ENCODE measurements at regions of chr15 and their contacts with region 1.

Region 1: GRCh38 chr15:89958074-89958805 is 42.9 kb upstream of the ZNF710 start:
- DNase-seq: peak; percentile 70
- H3K4me3 ChIP-seq: no peak overlapping the region
- H3K27ac ChIP-seq: peak overlapping the region; percentile 7 to 59
- H3K4me1 ChIP-seq: peaks cover 0 to 5% of the 10 kb centered on the region in 2 donors
- H3K27me3 ChIP-seq: no peaks in the 10 kb centered on the region
- CTCF ChIP-seq: no peak
- POLR2A ChIP-seq: no peak

Region 2: DNA sequence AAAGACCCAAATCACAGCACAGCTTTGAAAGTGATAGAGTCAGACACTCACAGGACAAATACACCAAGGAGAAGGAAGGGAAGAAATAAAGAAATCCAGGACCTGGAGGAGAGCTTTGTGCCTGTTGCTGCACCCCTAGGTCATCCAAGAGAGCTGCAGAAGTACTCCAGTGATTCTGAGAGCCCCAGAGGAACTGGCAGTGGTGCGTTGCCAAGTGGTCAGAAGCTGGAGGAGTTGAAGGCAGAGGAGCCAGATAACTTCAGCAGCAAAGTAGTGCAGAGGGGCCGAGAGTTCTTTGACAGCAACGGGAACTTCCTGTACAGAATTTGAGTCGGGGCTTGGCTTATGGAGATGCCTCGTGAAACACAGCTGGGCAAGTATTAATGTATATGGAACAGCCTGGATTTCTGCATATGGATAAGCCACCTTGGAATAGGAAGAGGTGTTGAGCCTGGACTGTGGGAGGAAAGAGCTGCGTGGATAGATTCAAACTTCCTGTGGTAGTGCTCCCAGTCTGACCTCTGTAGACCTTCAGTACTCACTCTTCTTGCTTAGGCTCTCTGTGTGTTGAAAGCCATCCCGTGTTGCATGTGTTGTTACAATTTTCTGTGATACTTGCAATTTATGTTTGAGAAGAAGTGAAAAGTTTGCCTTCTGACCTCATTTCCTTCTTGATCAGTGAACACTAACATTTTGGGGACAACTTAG is 313.4 kb after region 1 on chr15:
- intact Hi-C with region 1: no loop called
- DNase-seq: no peak
- H3K4me3 ChIP-seq: no peak overlapping the region
- H3K27ac ChIP-seq: no peak overlapping the region
- H3K4me1 ChIP-seq: peaks cover 0 to 20% of the 10 kb centered on the region in 2 donors
- H3K27me3 ChIP-seq: no peaks in the 10 kb centered on the region
- CTCF ChIP-seq: no peak
- POLR2A ChIP-seq: no peak

Region 3: GRCh38 chr15:90774731-90775484 is 816.7 kb after region 1 on chr15:
- intact Hi-C with region 1: no loop called
- DNase-seq: no peak
- H3K4me3 ChIP-seq: no peak overlapping the region
- H3K27ac ChIP-seq: no peak overlapping the region
- H3K4me1 ChIP-seq: no peaks in the 10 kb centered on the region
- H3K27me3 ChIP-seq: no peaks in the 10 kb centered on the region
- CTCF ChIP-seq: no peak
- POLR2A ChIP-seq: no peak

Region 4: DNA sequence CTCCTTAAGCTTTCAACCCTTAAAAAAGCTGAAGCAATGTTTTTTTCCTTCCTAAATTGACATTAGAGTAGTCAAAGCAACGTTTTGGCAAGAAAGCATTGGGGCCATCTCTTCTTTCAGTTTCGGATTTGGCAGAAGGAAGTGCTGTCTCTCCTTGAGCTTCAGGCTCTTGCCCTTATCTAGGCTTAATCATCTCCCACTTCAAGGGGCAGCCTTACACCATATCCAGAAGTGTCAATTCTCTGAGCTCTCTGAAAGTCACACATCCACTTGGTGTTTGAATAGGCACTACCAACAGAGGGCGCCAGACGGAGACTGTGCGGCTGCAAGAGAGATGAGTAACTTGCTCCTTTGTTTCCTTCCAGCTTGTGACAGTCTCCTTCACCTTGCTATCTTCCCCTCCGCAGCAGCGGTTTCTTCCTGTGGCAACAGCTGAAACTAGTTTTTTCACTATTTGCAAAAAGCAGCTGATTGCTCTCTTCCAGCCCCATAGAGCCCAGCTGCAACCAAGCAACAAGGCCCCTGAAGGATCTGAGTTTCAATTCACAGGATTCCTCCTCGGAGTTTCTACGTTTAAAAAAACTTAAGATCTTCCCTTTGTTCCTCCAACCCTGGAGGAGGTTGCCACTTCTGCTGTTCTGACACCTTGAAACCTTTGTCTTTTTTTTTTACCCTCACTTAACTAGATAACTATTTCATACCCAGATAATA is 1748.2 kb after region 1 on chr15:
- intact Hi-C with region 1: loop called (anchors 10 kb)
- DNase-seq: peak; percentile 64 to 68
- H3K4me3 ChIP-seq: peak overlapping the region in 1 of 3 donors; percentile 35
- H3K27ac ChIP-seq: peak overlapping the region in 1 of 2 donors; percentile 74
- H3K4me1 ChIP-seq: no peaks in the 10 kb centered on the region
- H3K27me3 ChIP-seq: no peaks in the 10 kb centered on the region
- CTCF ChIP-seq: peak; percentile 72 to 84 (median 83)
- POLR2A ChIP-seq: no peak